ENCODE measurements at regions of chr17 and their contacts with region 1.

Region 1: GRCh38 chr17:67689534-67690177 is 28.1 kb upstream of the NOL11 start:
- DNase-seq: peak; percentile 75
- CTCF ChIP-seq: peak; percentile 65

Region 2: GRCh38 chr17:67376737-67377487 is 312.7 kb before region 1 on chr17 and contains the start of gene PITPNC1:
- in situ Hi-C with region 1: loop called (anchors 10 kb)
- DNase-seq: peak; percentile 90
- CTCF ChIP-seq: peak; percentile 15

Region 3: GRCh38 chr17:67584991-67585602 is 104.6 kb before region 1 on chr17:
- in situ Hi-C with region 1: no loop called
- DNase-seq: no peak
- CTCF ChIP-seq: no peak

Region 4: GRCh38 chr17:67779098-67779672 is 89.5 kb after region 1 on chr17:
- in situ Hi-C with region 1: no loop called
- DNase-seq: peak; percentile 55
- CTCF ChIP-seq: peak; percentile 85

Measured in GM13977 (cell line).